CD8-positive, alpha-beta T cell (primary cell): ENCODE measurements at regions of chr2 and their contacts with region 1.

Region 1: GRCh38 chr2:3575534-3576262 is 638 bp downstream of the RPS7 start:
- DNase-seq: peak in 7 of 9 experiments; percentile 10 to 61 (median 29)
- ATAC-seq: peak; percentile 42
- H3K4me3 ChIP-seq: peak overlapping the region; percentile 69 to 70
- H3K4me3 Mint-ChIP-seq: peak overlapping the region; percentile 89
- H3K27ac ChIP-seq: peak overlapping the region; percentile 87 to 89
- H3K27ac Mint-ChIP-seq: peak overlapping the region; percentile 94
- H3K4me1 ChIP-seq: peaks cover 24% of the 10 kb centered on the region
- H3K4me1 Mint-ChIP-seq: peaks cover 47% of the 10 kb centered on the region
- H3K27me3 ChIP-seq: no peaks in the 10 kb centered on the region
- H3K27me3 Mint-ChIP-seq: no peaks in the 10 kb centered on the region
- CTCF ChIP-seq: no peak

Region 2: DNA sequence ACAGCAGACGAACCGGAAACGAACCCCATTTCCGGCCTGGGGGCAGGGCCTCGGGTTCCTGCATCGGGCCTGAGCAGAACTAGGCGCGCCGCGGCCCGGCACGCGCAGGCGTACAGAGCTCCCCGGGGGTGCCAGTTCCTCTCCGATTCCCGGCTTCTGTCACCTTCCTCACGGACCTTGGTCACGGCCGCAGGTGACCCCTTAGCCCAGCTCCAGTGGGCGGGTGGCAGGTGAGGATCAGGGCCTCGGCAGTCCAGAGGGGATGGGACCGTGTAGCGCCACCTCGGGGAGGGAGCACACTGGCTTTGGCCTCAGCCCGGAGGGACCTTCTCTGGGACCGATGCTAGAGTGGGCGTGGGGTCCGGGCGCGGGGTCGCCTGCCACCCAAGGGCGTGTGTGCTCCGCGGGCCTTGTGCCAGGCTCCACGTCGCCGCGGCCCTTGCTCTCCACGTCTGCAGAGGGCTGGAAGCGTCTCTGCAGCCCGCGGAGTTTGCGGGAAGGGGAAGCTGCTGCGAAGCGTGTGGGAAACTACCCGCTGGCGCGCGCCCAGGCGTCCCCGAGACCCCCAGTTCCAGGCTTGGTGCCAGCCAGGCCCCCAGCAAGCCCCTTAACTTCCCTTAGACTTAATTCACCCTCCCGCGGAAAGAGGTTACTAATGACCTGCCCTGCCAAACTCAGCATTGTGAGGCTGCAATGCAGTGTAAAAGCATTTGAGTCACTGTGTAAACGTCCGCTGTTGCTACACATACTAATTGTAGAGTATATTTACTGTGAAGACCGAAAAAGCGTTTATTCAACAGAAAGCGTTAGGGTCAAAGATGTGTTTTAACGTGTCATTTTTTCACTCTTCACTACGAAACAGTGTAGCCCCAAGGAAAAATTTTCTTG is 195.8 kb before region 1 on chr2 and contains the start of gene TRAPPC12:
- CTCF ChIA-PET with region 1: no interaction called
- POLR2A ChIA-PET with region 1: interaction called, 6 read pairs
- intact Hi-C with region 1: loop called (anchors 1 kb)
- DNase-seq: peak; percentile 86 to 95 (median 92)
- ATAC-seq: peak; percentile 79
- H3K4me3 ChIP-seq: peak within 1 kb of the TSS; percentile 82 to 88
- H3K4me3 Mint-ChIP-seq: peak within 1 kb of the TSS; percentile 97
- H3K27ac ChIP-seq: peak within 1 kb of the TSS; percentile 95
- H3K27ac Mint-ChIP-seq: peak within 1 kb of the TSS; percentile 99
- H3K4me1 ChIP-seq: peaks cover 29% of the 10 kb centered on the region
- H3K4me1 Mint-ChIP-seq: peaks cover 67% of the 10 kb centered on the region
- H3K27me3 ChIP-seq: no peaks in the 10 kb centered on the region
- H3K27me3 Mint-ChIP-seq: no peaks in the 10 kb centered on the region
- CTCF ChIP-seq: peak; percentile 24
- total RNA-seq, gene TRAPPC12: 33.3 to 35.1 TPM

Region 3: DNA sequence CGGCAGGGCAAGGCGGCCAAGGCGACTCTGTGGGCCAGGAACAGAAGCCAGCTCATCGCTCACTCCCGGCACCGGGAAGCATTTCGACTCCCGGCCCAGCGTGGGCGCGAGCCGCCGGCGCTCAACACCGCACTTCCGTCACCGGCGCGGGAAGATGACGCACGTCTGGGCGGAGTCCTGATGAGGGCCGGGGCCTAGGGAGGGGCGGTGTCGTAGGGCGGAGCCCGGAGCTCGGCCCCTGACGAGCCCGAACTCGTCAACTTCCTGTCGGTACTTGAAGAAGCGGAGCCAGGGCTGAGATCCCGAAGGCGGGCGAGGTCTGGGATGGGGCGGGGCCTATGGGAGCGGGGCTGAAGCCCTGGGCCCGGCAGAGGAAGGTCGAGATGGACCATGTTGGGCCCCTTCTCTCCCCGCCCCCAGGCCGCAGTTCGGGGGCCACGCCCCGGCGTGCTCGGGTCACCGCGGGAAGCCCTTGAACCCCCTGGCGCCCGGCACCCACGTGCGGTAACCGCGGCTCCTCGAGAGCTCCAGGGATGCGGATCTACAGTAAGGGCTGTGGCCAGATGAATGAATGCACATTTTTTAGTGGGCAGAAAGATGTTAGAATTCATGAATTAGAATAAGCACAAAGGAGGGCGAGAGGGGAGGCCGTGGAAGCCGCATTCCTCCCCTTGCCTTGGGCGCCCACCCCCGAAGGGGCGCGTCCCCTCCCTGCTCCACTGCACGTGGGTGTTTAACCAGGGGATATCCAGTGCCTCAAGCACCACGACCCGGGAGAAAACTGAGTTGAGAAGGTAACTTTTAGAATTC is 17.3 kb before region 1 on chr2 and contains the start of gene RNASEH1:
- CTCF ChIA-PET with region 1: interaction called, 6 read pairs
- POLR2A ChIA-PET with region 1: interaction called, 34 read pairs
- intact Hi-C with region 1: loop called (anchors 1 kb)
- DNase-seq: peak; percentile 96 to 99 (median 99)
- ATAC-seq: peak; percentile 96
- H3K4me3 ChIP-seq: peak within 1 kb of the TSS; percentile 94 to 96
- H3K4me3 Mint-ChIP-seq: peak within 1 kb of the TSS; percentile 91
- H3K27ac ChIP-seq: peak within 1 kb of the TSS; percentile 94
- H3K27ac Mint-ChIP-seq: peak within 1 kb of the TSS; percentile 96
- H3K4me1 ChIP-seq: peaks cover 20% of the 10 kb centered on the region
- H3K4me1 Mint-ChIP-seq: peaks cover 29% of the 10 kb centered on the region
- H3K27me3 ChIP-seq: no peaks in the 10 kb centered on the region
- H3K27me3 Mint-ChIP-seq: no peaks in the 10 kb centered on the region
- CTCF ChIP-seq: no peak
- total RNA-seq, gene RNASEH1: 31.1 to 34.1 TPM

Region 4: DNA sequence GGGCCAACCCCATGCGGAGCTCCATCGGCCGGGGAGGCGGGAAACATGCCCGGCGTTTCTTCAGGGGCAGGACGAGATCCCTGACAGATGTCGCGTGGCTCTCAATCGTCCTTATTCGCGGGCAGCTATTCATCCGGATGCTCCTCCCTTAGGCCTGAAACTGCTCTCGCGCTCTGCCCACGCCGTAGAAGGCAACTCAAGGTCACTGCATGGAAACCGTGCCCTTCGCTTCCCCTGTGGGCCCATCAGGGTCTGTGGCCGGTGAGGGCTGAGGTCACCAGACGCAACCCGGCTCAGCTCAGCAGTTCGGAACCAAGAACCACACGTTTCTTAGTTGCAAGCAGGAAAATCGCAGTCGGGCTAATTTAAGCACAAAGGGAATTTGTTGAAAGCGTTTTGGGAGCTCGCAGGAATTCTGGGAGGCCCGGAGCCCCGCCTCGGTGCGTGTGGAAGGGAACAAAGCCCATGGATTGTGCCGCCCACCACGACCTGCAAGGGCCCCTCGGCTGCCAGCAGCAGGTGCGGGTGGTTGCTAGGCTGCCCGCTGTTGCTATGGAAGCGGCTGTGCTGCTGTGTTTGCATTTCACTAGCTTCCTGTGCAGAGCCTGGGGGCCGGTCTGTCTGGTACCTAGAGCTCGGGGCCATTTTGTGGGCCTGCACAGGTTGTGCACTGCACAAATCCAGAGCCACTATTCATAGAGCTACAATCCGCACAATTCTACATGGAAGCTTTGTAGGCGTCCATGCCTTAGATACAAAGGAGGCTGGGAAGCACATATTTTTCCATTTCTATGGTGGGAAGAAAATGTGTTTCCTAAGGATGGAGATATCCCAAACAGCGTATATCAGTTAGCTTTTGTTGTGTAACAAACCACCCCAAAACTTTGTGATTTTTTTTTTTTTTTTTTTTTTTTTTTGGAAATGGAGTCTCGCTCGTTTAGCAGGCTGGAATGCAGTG is 76.3 kb after region 1 on chr2:
- CTCF ChIA-PET with region 1: interaction called, 3 read pairs
- POLR2A ChIA-PET with region 1: interaction called, 6 read pairs
- intact Hi-C with region 1: loop called in 1 of 2 experiments (anchors 5 kb)
- DNase-seq: peak; percentile 45 to 80 (median 69)
- ATAC-seq: peak; percentile 61
- H3K4me3 ChIP-seq: peak overlapping the region; percentile 47 to 58
- H3K4me3 Mint-ChIP-seq: peak overlapping the region; percentile 86
- H3K27ac ChIP-seq: peak overlapping the region in 1 of 2 experiments; percentile 68
- H3K27ac Mint-ChIP-seq: peak overlapping the region; percentile 64
- H3K4me1 ChIP-seq: no peaks in the 10 kb centered on the region
- H3K4me1 Mint-ChIP-seq: peaks cover 6% of the 10 kb centered on the region
- H3K27me3 ChIP-seq: no peaks in the 10 kb centered on the region
- H3K27me3 Mint-ChIP-seq: peaks cover 5% of the 10 kb centered on the region
- CTCF ChIP-seq: no peak

Region 5: GRCh38 chr2:4662161-4662779 is 1086.6 kb after region 1 on chr2:
- CTCF ChIA-PET with region 1: no interaction called
- POLR2A ChIA-PET with region 1: no interaction called
- intact Hi-C with region 1: no loop called
- DNase-seq: no peak
- ATAC-seq: no peak
- H3K4me3 ChIP-seq: no peak overlapping the region
- H3K4me3 Mint-ChIP-seq: no peak overlapping the region
- H3K27ac ChIP-seq: no peak overlapping the region
- H3K27ac Mint-ChIP-seq: no peak overlapping the region
- H3K4me1 ChIP-seq: no peaks in the 10 kb centered on the region
- H3K4me1 Mint-ChIP-seq: no peaks in the 10 kb centered on the region
- H3K27me3 ChIP-seq: no peaks in the 10 kb centered on the region
- H3K27me3 Mint-ChIP-seq: no peaks in the 10 kb centered on the region
- CTCF ChIP-seq: no peak